Ascending aorta (tissue), 2 donors: ENCODE measurements at regions of chr4 and their contacts with region 1.

Region 1: DNA sequence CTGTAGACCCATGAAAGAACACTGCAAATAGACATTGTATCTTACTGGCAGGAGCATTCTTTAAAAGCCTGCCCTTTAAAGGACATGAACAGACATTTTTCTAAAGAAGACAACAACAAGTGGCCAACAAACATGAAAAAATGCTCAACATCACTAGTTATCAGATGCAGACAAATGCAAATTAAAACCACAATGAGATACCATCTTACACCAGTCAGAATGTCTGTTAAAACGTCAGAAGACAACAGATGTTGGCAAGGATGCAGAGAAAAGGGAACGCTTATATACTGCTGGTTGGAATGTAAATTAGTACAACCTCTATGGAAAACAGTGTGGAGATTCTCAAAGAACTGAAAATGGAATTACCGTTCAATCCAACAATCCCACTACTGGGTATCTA is 77.2 kb downstream of the ATP10D start:
- DNase-seq: no peak
- H3K4me3 ChIP-seq: no peak overlapping the region
- H3K27ac ChIP-seq: no peak overlapping the region
- H3K4me1 ChIP-seq: peaks cover 0 to 3% of the 10 kb centered on the region in 2 donors
- H3K27me3 ChIP-seq: no peaks in the 10 kb centered on the region
- CTCF ChIP-seq: no peak

Region 2: GRCh38 chr4:47490550-47490949 is 71.7 kb before region 1 on chr4:
- intact Hi-C with region 1: loop called (anchors 5 kb)
- DNase-seq: no peak
- H3K4me3 ChIP-seq: peak overlapping the region in 1 of 2 donors; percentile 19
- H3K27ac ChIP-seq: peak overlapping the region; percentile 0 to 8
- H3K4me1 ChIP-seq: peaks cover 0 to 17% of the 10 kb centered on the region in 2 donors
- H3K27me3 ChIP-seq: no peaks in the 10 kb centered on the region
- CTCF ChIP-seq: peak in 1 of 3 experiments; percentile 37